ENCODE measurements at regions of chr13 and their contacts with region 1.

Region 1: DNA sequence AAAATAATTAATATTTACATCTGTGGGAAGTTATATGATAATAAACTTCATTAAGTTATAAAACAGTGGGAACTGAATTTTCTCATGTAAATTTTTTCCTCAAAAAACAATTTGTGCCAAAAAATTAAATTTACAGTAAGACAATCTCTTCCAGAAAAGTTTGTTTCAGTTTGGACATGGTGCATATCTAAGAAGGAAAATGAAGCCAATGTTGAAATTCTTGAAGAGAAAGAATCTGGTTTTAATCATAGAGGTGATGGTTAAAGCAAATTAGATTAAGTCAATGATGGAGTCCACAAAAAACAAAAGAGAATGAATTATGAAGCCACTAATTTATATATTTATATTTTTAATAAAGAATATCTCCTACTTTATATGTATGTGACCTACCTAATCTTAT is 457.2 kb upstream of the SLITRK1 start:
- DNase-seq: no peak
- ATAC-seq: no peak

Region 2: GRCh38 chr13:84845907-84846619 is 506.6 kb after region 1 on chr13:
- intact Hi-C with region 1: loop called (anchors 5 kb)
- DNase-seq: no peak
- ATAC-seq: no peak

Measured in sciatic nerve (tissue), 2 donors.